Activated CD8-positive, alpha-beta memory T cell treated with anti-CD3 and anti-CD28 coated beads, Interleukin-2, amount 10 ng/mL, durations not matched to agents 7 days and 5 days (primary cell): ENCODE measurements at regions of chr17 and their contacts with region 1.

Region 1: DNA sequence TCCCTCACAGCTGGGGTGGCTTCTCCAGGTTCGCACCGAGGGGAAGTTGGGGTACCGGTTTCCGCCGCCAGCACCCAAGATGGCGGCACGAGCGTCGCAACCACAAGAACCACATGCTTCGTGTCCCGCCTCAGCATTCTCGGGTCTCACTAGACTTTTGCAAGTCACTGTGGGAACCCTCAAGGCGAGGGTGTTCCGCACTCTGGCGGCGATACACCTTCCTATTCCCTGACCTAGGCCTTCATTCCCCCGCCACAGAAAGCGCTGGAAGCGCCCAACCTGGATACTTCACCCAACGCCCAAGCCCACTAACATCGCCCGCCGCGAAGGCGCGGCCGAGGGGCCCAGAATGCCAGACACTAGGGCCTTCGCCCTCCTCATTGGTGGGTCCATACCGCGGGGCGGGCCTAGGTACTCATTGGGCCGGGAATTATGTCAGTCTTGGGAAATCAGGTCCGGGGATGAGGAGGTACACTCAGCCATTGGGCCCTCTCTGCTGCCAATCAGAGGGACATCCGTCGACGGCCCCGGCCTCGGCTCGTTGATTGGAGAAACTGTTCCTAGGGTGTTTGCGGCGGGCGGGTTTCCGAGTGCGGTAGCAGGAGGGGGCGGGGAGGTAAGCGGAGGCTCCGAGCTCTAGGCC is at the start of gene NFE2L1:
- DNase-seq: peak; percentile 100
- ATAC-seq: peak; percentile 95
- H3K4me3 Mint-ChIP-seq: peak within 1 kb of the TSS; percentile 98
- H3K27ac Mint-ChIP-seq: peak within 1 kb of the TSS; percentile 96
- H3K4me1 Mint-ChIP-seq: peaks cover 60% of the 10 kb centered on the region
- H3K27me3 Mint-ChIP-seq: no peaks in the 10 kb centered on the region
- total RNA-seq, gene NFE2L1: 56.1 to 80.8 TPM

Region 2: DNA sequence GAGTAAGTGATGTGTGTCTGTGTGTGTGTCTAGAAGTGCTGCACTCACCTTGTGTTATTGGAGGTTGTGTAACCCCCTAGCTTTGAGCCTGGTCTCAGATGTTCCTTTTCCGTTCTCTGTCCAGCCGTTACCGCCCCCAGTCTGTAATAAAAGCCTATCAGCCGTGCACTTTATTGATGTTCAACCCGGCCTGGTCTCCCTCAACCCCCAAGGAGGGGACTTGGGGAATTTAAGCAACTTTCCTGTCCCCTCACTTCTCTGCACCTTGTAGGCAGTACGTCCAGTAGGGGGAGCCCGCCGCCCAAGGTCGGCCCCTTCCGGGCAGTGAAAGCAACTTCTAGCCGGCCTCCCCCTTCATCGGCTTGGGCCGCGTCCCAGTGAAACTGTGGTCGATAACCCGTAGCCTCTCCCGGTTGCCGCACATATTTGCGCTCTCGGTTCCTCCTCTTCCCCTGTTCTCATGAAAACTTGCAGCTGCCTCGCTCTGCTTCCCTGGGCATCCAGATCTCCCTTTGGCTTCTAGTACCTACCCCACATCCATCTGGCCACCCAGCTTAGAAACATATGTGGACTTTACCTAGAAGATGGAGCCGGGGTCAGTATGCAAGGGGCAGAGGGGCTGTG is 98.6 kb before region 1 on chr17:
- CTCF ChIA-PET with region 1: interaction called, 13 read pairs
- DNase-seq: peak; percentile 90
- ATAC-seq: peak; percentile 80
- H3K4me3 Mint-ChIP-seq: peak overlapping the region; percentile 55
- H3K27ac Mint-ChIP-seq: peak overlapping the region; percentile 78
- H3K4me1 Mint-ChIP-seq: peaks cover 40% of the 10 kb centered on the region
- H3K27me3 Mint-ChIP-seq: no peaks in the 10 kb centered on the region

Region 3: GRCh38 chr17:48011405-48012150 is 36.3 kb before region 1 on chr17:
- CTCF ChIA-PET with region 1: interaction called, 16 read pairs
- DNase-seq: peak; percentile 83
- ATAC-seq: peak; percentile 85
- H3K4me3 Mint-ChIP-seq: peak overlapping the region; percentile 76
- H3K27ac Mint-ChIP-seq: peak overlapping the region; percentile 72
- H3K4me1 Mint-ChIP-seq: peaks cover 19% of the 10 kb centered on the region
- H3K27me3 Mint-ChIP-seq: peaks cover 36% of the 10 kb centered on the region

Region 4: DNA sequence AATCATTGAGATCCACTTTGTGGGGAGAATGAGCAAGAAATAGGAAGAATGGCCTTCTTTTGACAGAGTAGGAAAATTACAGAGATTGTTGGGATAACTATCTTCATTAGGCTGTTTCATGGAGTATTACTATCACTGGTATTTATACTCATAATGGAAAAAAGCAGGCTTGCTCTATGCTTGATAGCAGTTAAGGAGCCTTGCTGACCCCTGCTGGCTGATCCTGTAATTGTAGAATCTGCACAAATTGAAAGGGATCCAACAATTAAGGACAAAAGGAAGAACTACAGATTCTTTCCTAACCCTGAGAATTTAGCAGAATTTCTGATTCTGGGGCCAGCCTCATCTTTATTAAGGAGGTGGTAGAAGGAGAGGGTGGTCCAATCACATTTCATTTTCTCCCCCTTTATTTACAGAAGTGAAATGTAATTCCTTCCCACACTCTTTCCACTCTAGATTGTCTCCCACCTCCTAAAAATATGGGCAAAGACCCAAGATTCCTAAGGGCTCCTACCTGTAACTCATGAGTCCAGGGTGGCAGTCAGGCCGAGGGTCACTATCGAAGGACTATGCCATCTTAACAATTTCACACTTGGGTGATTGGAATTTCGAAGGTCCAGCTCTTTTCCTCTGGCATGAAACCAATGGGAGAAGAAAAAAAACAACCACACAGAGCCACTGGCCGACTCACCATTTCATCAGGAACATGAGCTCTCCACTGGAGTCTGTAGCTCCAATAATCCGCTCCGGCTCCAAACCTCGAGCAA is 26.6 kb after region 1 on chr17:
- CTCF ChIA-PET with region 1: interaction called, 31 read pairs
- DNase-seq: peak; percentile 83
- ATAC-seq: peak; percentile 84
- H3K4me3 Mint-ChIP-seq: no peak overlapping the region
- H3K27ac Mint-ChIP-seq: no peak overlapping the region
- H3K4me1 Mint-ChIP-seq: no peaks in the 10 kb centered on the region
- H3K27me3 Mint-ChIP-seq: no peaks in the 10 kb centered on the region

Region 5: DNA sequence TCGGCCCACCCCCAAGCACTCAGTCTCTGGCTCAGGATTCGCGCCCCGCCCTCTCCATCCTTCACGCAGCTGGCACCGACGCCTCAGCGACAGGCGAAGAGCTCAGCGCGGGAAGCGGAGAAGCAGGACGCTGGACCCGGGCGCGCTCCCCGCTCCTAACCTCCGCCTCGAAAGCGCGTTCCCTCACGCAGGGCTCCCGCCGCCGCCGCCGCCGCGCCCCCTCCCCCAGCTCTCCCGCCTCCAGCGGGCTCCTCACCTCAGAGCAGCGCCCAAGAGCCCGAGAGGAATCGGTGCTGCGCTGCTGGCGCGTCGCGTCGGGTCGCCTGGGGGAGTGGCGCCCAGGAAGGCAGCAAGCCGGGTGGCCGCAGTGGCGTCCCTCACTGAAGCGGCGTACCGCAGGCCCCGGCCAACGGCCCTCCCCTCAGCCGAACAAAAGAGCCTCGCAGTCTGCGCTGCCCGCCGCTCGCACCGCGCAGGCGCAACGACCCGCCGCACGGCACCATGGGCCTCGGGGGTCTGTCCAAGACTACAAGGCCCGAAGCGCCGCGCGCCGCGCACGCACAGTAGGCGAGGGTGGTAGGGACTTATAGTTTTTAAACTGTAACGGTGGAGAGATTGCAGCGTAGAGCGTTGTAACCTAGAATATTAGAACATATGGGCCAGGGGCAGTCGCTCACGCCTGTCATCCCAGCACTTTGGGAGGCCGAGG is 53.3 kb after region 1 on chr17 and contains the start of gene CBX1:
- CTCF ChIA-PET with region 1: interaction called, 12 read pairs
- DNase-seq: peak; percentile 97
- ATAC-seq: peak; percentile 97
- H3K4me3 Mint-ChIP-seq: peak within 1 kb of the TSS; percentile 91
- H3K27ac Mint-ChIP-seq: peak within 1 kb of the TSS; percentile 88
- H3K4me1 Mint-ChIP-seq: peaks cover 49% of the 10 kb centered on the region
- H3K27me3 Mint-ChIP-seq: no peaks in the 10 kb centered on the region
- total RNA-seq, gene CBX1: 46.3 to 47.8 TPM